ENCODE measurements at regions of chr6 and their contacts with region 1.

Region 1: GRCh38 chr6:37566111-37566949 is 66.6 kb upstream of the CCDC167 start:
- DNase-seq: no peak
- ATAC-seq: peak; percentile 73
- H3K4me3 ChIP-seq: peak overlapping the region; percentile 61
- H3K27ac ChIP-seq: peak overlapping the region; percentile 91
- H3K4me1 ChIP-seq: peaks cover 52% of the 10 kb centered on the region
- H3K27me3 ChIP-seq: no peaks in the 10 kb centered on the region
- CTCF ChIP-seq: peak; percentile 86 to 97 (median 89)
- EP300 ChIP-seq: no peak
- POLR2A ChIP-seq: no peak
- RAD21 ChIP-seq: peak; percentile 93

Region 2: GRCh38 chr6:37381579-37381978 is 184.8 kb before region 1 on chr6:
- CTCF ChIA-PET with region 1: interaction called, 13 read pairs
- POLR2A ChIA-PET with region 1: no interaction called
- RAD21 ChIA-PET with region 1: interaction called, 3 read pairs
- SMC1A ChIA-PET with region 1: interaction called, 5 read pairs
- in situ Hi-C with region 1: no loop called
- intact Hi-C with region 1: loop called (anchors 5 kb)
- DNase-seq: peak; percentile 32
- ATAC-seq: peak; percentile 87
- H3K4me3 ChIP-seq: no peak overlapping the region
- H3K27ac ChIP-seq: no peak overlapping the region
- H3K4me1 ChIP-seq: peaks cover 3% of the 10 kb centered on the region; the same call in 1 of the 2 replicates
- H3K27me3 ChIP-seq: no peaks in the 10 kb centered on the region
- CTCF ChIP-seq: peak; percentile 72 to 85 (median 83)
- EP300 ChIP-seq: no peak
- POLR2A ChIP-seq: no peak
- RAD21 ChIP-seq: peak; percentile 76

Region 3: GRCh38 chr6:37483917-37484785 is 82.2 kb before region 1 on chr6:
- CTCF ChIA-PET with region 1: interaction called, 97 read pairs
- POLR2A ChIA-PET with region 1: interaction called, 3 read pairs
- RAD21 ChIA-PET with region 1: interaction called, 20 read pairs
- SMC1A ChIA-PET with region 1: interaction called, 92 read pairs
- in situ Hi-C with region 1: no loop called
- intact Hi-C with region 1: loop called (anchors 1 kb)
- DNase-seq: no peak
- ATAC-seq: peak; percentile 93
- H3K4me3 ChIP-seq: no peak overlapping the region
- H3K27ac ChIP-seq: no peak overlapping the region
- H3K4me1 ChIP-seq: peaks cover 7% of the 10 kb centered on the region; the same call in 1 of the 2 replicates
- H3K27me3 ChIP-seq: no peaks in the 10 kb centered on the region
- CTCF ChIP-seq: peak; percentile 85 to 97 (median 96); a peak in 5 of 6 replicates
- EP300 ChIP-seq: no peak
- POLR2A ChIP-seq: no peak; the same call in 1 of the 2 replicates
- RAD21 ChIP-seq: peak; percentile 97

Region 4: DNA sequence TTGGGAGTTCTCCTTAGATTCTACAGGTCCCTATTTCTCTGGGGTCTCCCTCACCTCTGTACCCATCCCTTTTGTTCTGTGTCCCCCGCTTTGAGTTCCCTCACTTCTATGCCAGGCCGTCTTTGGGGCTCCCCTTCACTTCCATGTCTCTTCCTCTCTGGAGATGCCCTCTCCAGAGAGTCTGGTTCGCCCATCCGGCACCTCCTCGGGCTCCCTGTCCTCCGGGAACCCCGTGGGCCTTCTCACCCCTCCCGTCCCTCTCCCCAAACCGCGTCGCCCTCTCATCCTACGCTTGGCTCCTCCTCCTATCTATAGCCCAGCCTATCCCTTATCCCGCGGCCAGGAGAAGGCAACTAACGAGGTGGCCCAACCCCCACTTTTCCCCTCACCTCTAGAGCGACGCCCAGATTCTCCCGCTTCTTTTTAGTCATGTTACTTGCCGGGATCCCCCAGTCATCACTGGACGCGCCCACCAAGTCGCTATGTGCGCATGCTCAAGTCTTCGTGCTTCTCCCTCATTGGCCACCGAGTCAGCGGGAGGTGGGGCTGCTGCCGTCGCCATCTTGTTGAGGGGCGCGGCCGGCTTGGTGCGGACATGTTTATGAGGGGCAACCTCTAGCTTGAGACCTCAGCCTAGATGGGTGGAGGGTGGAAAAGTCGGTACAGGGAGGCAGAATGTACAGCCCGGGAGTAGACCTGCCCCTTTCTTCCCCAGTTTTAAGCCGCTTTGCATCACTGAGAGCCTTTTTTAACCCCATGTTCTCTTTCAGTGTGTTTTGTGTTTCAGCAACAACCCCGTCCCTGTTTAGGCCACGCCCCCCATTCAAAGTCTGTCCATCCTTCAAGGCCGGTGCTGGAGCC is 66.7 kb before region 1 on chr6 and contains the start of gene CCDC167:
- CTCF ChIA-PET with region 1: interaction called, 19 read pairs
- POLR2A ChIA-PET with region 1: interaction called, 53 read pairs
- RAD21 ChIA-PET with region 1: interaction called, 23 read pairs
- SMC1A ChIA-PET with region 1: interaction called, 18 read pairs
- in situ Hi-C with region 1: no loop called
- intact Hi-C with region 1: loop called (anchors 2 kb)
- DNase-seq: peak; percentile 96
- ATAC-seq: peak; percentile 89
- H3K4me3 ChIP-seq: peak within 1 kb of the TSS; percentile 84
- H3K27ac ChIP-seq: peak within 1 kb of the TSS; percentile 92
- H3K4me1 ChIP-seq: peaks cover 47% of the 10 kb centered on the region
- H3K27me3 ChIP-seq: no peaks in the 10 kb centered on the region
- CTCF ChIP-seq: no peak
- EP300 ChIP-seq: no peak
- POLR2A ChIP-seq: peak; percentile 72
- RAD21 ChIP-seq: no peak
- polyA plus RNA-seq, gene CCDC167: 323 to 380 TPM

Region 5: GRCh38 chr6:37547564-37548061 is 18.7 kb before region 1 on chr6:
- CTCF ChIA-PET with region 1: interaction called, 235 read pairs
- POLR2A ChIA-PET with region 1: interaction called, 114 read pairs
- RAD21 ChIA-PET with region 1: interaction called, 266 read pairs
- SMC1A ChIA-PET with region 1: interaction called, 232 read pairs
- in situ Hi-C with region 1: no loop called
- intact Hi-C with region 1: no loop called
- DNase-seq: no peak
- ATAC-seq: peak; percentile 38
- H3K4me3 ChIP-seq: no peak overlapping the region
- H3K27ac ChIP-seq: peak overlapping the region; percentile 83
- H3K4me1 ChIP-seq: peaks cover 64% of the 10 kb centered on the region
- H3K27me3 ChIP-seq: no peaks in the 10 kb centered on the region
- CTCF ChIP-seq: no peak
- EP300 ChIP-seq: no peak
- POLR2A ChIP-seq: no peak
- RAD21 ChIP-seq: no peak

Region 6: GRCh38 chr6:37576336-37576813 is 10.0 kb after region 1 on chr6:
- CTCF ChIA-PET with region 1: interaction called, 17 read pairs
- POLR2A ChIA-PET with region 1: no interaction called
- RAD21 ChIA-PET with region 1: interaction called, 5 read pairs
- SMC1A ChIA-PET with region 1: interaction called, 8 read pairs
- in situ Hi-C with region 1: no loop called
- intact Hi-C with region 1: no loop called
- DNase-seq: no peak
- ATAC-seq: no peak
- H3K4me3 ChIP-seq: no peak overlapping the region
- H3K27ac ChIP-seq: no peak overlapping the region
- H3K4me1 ChIP-seq: no peaks in the 10 kb centered on the region
- H3K27me3 ChIP-seq: no peaks in the 10 kb centered on the region
- CTCF ChIP-seq: no peak
- EP300 ChIP-seq: no peak
- POLR2A ChIP-seq: no peak
- RAD21 ChIP-seq: no peak

Region 7: DNA sequence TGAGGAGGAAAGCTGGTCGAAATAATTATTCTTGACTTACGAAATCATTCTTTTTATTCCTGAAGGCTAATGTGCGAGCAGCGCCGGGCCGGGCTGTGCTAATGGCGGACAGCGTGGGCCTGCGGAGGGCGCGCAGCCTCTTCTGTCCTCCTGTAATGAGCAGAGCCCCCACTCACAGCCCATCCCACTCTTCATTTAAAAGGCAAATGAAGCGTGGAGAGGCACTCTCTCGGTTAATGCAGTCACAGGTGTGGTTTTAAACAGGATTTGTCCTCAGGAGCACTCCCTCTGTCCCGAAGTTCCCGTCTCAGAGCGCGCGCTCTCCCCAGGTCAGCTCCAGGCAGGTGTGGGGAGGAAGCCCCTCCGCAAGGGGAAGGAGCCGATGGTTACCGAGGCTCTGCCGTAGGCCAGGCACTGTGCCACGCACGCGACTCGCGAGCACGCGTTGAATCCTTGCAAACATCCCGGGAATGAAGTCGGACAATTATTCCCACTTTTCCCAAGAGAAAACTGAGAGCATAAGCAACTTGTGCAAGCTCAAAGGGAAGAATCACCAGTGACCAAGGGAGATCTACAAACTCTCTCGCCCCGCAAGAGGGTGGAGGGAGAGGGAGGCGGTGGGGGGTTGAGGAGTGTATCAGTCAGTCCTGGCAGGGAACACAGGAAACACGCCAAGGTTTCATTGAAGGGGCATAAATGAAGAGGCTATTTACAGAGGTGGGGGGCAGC is 217.7 kb after region 1 on chr6:
- CTCF ChIA-PET with region 1: no interaction called
- POLR2A ChIA-PET with region 1: no interaction called
- RAD21 ChIA-PET with region 1: no interaction called
- SMC1A ChIA-PET with region 1: no interaction called
- in situ Hi-C with region 1: no loop called
- intact Hi-C with region 1: no loop called
- DNase-seq: no peak
- ATAC-seq: peak; percentile 70
- H3K4me3 ChIP-seq: peak overlapping the region; percentile 58
- H3K27ac ChIP-seq: no peak overlapping the region
- H3K4me1 ChIP-seq: peaks cover 21% of the 10 kb centered on the region
- H3K27me3 ChIP-seq: no peaks in the 10 kb centered on the region; a peak in 1 of 4 replicates
- CTCF ChIP-seq: peak in 1 of 3 experiments; percentile 12; a peak in 1 of 6 replicates
- EP300 ChIP-seq: no peak
- POLR2A ChIP-seq: peak; percentile 66
- RAD21 ChIP-seq: no peak

Measured in GM12878 (cell line).